ENCODE measurements at regions of chr7 and their contacts with region 1.

Region 1: DNA sequence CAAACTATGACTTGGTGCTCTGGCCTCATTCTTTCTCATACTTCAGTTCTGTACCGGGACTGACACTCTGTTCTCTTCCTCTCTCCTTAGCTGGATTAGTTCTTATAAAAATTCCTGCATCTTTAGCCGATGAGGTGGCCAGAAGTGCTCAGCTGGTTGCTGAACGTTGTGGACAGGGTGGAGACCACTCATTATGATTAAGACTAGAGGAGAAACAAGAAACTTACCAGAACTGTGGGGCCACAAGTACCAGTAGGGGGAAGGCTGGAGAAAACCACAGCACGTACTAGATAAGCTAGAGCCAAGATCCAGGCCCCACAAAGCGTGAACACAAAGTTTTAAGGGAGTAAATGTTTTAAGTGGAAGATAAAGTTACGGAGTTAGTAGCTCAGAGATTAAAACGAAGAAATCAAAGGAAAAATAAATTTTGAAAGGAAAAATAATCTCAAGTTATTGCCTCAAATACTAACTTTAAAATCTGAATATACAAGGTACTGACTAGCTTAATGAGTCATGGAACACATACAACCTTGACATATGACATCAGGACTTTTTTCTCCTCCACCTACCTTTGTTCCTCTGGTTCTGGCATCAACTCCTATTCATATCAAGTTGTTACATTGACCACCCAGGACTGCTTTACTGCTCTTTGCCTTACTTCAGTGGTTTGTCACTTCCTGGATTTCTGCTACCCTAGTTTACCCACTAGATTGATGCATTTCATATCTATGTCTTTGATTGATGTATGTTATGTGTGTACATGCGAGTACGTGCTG is 469.0 kb downstream of the TFEC start:
- DNase-seq: no peak
- ATAC-seq: no peak
- H3K4me3 ChIP-seq: no peak overlapping the region
- H3K27ac ChIP-seq: no peak overlapping the region
- H3K4me1 ChIP-seq: no peaks in the 10 kb centered on the region
- H3K27me3 ChIP-seq: peaks cover 0 to 4% (median 0%) of the 10 kb centered on the region in 7 donors
- CTCF ChIP-seq: no peak

Region 2: GRCh38 chr7:115620036-115620435 is 58.5 kb after region 1 on chr7:
- intact Hi-C with region 1: loop called in 1 of 10 experiments (anchors 10 kb)
- DNase-seq: no peak
- ATAC-seq: no peak
- H3K4me3 ChIP-seq: no peak overlapping the region
- H3K27ac ChIP-seq: no peak overlapping the region
- H3K4me1 ChIP-seq: no peaks in the 10 kb centered on the region
- H3K27me3 ChIP-seq: no peaks in the 10 kb centered on the region
- CTCF ChIP-seq: no peak